Gastrocnemius medialis (tissue), 4 donors: ENCODE measurements at regions of chr3 and their contacts with region 1.

Region 1: DNA sequence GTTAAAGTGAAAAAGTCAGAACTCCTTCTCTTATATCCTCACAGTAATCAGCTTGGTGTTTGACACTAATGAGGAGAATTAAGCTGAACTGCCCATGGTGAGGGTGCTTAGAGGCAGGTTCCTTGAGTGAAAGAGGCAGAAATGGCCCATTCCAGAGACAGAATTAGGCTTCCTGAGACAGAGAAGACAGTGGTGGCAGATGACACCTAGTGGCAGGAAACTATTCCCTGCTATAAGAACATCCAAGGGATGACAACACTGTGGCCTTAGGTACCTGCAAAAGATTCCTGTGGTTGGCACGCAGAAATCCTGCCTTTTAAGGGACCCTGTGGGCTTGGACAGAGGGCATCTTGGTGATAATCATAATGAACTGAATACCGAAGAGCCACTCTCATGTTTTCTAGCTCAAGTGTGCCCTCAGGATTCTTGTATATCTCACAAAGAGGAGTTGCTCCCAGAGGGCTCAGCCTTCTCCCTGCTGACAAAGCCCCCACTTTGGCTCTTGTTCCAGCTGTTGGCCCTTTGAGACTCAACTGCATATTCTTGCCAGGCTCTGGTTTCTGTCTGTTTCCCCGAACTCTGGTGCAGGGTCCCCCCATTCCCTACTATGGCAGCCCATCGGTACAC is 56.0 kb downstream of the KBTBD12 start:
- DNase-seq: no peak
- ATAC-seq: peak; percentile 62 to 91
- H3K4me3 ChIP-seq: no peak overlapping the region
- H3K27ac ChIP-seq: no peak overlapping the region
- H3K4me1 ChIP-seq: no peaks in the 10 kb centered on the region
- H3K27me3 ChIP-seq: no peaks in the 10 kb centered on the region
- CTCF ChIP-seq: peak; percentile 44 to 76 (median 63)
- POLR2A ChIP-seq: no peak

Region 2: GRCh38 chr3:127574880-127575878 is 395.9 kb before region 1 on chr3:
- in situ Hi-C with region 1: no loop called
- intact Hi-C with region 1: loop called (anchors 10 kb)
- DNase-seq: peak; percentile 61 to 85
- ATAC-seq: peak; percentile 92 to 97
- H3K4me3 ChIP-seq: no peak overlapping the region
- H3K27ac ChIP-seq: no peak overlapping the region
- H3K4me1 ChIP-seq: peaks cover 0 to 6% of the 10 kb centered on the region in 2 donors
- H3K27me3 ChIP-seq: no peaks in the 10 kb centered on the region
- CTCF ChIP-seq: peak; percentile 94 to 98 (median 96)
- POLR2A ChIP-seq: no peak

Region 3: GRCh38 chr3:127639173-127640030 is 331.7 kb before region 1 on chr3:
- in situ Hi-C with region 1: loop called in 2 of 4 experiments (anchors 10 kb)
- intact Hi-C with region 1: no loop called
- DNase-seq: no peak
- ATAC-seq: no peak
- H3K4me3 ChIP-seq: no peak overlapping the region
- H3K27ac ChIP-seq: no peak overlapping the region
- H3K4me1 ChIP-seq: no peaks in the 10 kb centered on the region
- H3K27me3 ChIP-seq: no peaks in the 10 kb centered on the region
- CTCF ChIP-seq: no peak
- POLR2A ChIP-seq: no peak

Region 4: DNA sequence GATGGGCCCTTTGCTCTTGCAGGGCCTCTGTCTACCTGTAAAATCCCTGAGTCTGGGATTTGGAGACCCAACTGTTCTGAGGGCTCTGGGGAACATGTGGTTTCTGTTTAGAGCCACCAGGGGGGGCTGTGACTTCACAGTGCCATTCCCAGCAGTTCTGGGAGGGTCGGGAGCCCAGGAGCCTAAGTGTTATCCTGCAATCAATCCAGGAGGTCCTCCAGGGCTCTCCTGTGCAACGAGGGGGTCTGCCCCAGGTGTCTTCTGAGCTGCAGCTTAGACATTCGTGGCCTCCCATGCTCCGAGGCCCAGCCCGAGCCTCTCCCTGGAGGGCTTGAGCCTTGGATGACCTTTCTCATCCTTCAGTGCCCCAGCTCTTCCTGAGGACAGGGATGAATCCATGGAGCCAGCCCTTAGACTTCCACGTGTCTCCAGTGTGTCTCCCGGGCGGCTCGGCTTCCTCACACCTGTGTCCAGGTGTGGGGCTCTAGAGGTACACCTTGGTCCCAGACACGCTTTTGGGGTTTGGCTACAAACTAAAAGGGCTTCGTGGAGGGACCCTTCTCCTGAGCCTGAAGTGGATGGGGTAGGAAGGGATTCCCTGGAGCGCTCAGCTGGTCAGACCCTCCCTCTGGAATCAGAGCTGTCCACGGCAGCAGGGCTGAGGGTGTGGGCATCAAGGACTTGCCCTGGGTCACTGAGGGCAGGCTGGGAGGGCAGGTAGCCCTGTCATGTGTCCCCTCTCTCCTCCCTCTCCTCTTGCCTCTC is 318.7 kb before region 1 on chr3:
- in situ Hi-C with region 1: loop called (anchors 10 to 25 kb)
- intact Hi-C with region 1: loop called (anchors 1 kb)
- DNase-seq: no peak
- ATAC-seq: peak; percentile 78 to 89
- H3K4me3 ChIP-seq: no peak overlapping the region
- H3K27ac ChIP-seq: no peak overlapping the region
- H3K4me1 ChIP-seq: peaks cover 0 to 5% of the 10 kb centered on the region in 2 donors
- H3K27me3 ChIP-seq: no peaks in the 10 kb centered on the region
- CTCF ChIP-seq: peak; percentile 87 to 97 (median 90)
- POLR2A ChIP-seq: no peak

Region 5: DNA sequence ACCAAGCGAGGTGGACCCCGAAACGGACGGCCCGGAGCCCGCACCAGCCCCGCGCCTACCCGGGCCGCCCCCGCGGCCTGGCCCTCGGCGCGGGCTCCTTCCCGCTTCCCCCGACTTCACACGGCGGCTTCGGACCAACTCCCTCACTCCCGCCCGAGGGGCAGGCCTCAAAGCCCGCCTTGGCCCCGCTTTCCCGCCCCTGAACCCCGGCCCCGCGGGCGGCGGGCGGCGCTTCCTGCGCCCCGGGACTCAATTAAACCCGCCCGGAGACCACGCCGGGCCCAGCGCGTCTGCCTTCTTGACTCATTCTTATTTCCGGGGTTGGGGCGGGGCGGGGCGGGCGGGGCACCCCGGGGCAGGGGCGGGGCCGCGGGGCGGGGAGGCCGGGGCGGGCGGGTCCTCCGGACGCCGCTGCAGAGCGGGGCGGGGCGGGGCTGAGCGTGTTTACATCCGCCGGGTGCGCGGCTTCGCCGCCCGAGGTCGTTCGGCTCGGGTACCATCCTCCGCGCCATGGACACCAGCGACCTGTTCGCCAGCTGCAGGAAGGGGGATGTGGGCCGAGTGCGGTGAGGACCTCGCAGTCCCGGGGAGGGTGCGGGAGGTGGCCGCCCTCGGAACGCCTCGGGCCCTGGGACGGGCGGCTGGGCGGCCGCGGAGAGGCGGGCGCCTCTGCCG is 298.4 kb before region 1 on chr3 and contains the start of gene ABTB1:
- in situ Hi-C with region 1: loop called in 1 of 4 experiments (anchors 25 kb)
- intact Hi-C with region 1: no loop called
- DNase-seq: peak; percentile 75 to 81
- ATAC-seq: peak; percentile 84 to 87
- H3K4me3 ChIP-seq: peak within 1 kb of the TSS; percentile 63 to 91 (median 80)
- H3K27ac ChIP-seq: peak within 1 kb of the TSS; percentile 85 to 98 (median 90)
- H3K4me1 ChIP-seq: peaks cover 11 to 19% of the 10 kb centered on the region in 2 donors
- H3K27me3 ChIP-seq: no peaks in the 10 kb centered on the region
- CTCF ChIP-seq: no peak
- POLR2A ChIP-seq: peak; percentile 91 to 93
- total RNA-seq, gene ABTB1: 22.9 to 37.5 (median 30.1) TPM

Region 6: DNA sequence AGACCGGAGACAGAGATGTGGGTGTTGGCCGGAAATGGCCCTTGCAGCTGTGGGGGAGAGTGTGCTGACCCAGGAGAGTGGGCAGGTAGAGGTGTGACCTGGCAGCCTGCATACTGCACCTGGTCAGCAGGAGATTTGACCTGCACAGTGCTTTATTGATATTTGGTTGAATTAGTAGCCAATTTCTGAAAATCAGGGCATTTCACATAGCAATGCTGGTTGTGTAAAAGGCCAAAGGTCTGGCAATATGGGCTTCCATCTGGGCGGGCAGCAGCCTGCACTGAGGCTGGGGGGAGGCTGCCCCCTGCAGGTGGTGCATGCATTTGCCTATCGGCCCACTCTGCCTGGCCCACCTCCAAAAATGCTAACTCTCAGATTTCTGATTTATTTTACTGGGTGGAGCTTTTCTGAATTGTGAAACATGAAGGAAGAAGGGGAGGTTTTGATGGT is 139.3 kb before region 1 on chr3:
- in situ Hi-C with region 1: no loop called
- intact Hi-C with region 1: loop called (anchors 5 kb)
- DNase-seq: peak in 1 of 2 donors; percentile 46
- ATAC-seq: peak; percentile 45 to 79
- H3K4me3 ChIP-seq: no peak overlapping the region
- H3K27ac ChIP-seq: no peak overlapping the region
- H3K4me1 ChIP-seq: no peaks in the 10 kb centered on the region
- H3K27me3 ChIP-seq: no peaks in the 10 kb centered on the region
- CTCF ChIP-seq: peak; percentile 75 to 90 (median 81)
- POLR2A ChIP-seq: no peak